Heart right ventricle (tissue), 16 donors: ENCODE measurements at regions of chr17 and their contacts with region 1.

Region 1: GRCh38 chr17:76307299-76307965 is 644 bp downstream of the QRICH2 start:
- DNase-seq: no peak
- ATAC-seq: peak in 4 of 8 donors; percentile 6 to 51 (median 27)
- H3K4me3 ChIP-seq: no peak overlapping the region
- H3K27ac ChIP-seq: no peak overlapping the region
- H3K4me1 ChIP-seq: peaks cover 0 to 3% (median 0%) of the 10 kb centered on the region in 9 donors
- H3K27me3 ChIP-seq: no peaks in the 10 kb centered on the region
- CTCF ChIP-seq: no peak

Region 2: DNA sequence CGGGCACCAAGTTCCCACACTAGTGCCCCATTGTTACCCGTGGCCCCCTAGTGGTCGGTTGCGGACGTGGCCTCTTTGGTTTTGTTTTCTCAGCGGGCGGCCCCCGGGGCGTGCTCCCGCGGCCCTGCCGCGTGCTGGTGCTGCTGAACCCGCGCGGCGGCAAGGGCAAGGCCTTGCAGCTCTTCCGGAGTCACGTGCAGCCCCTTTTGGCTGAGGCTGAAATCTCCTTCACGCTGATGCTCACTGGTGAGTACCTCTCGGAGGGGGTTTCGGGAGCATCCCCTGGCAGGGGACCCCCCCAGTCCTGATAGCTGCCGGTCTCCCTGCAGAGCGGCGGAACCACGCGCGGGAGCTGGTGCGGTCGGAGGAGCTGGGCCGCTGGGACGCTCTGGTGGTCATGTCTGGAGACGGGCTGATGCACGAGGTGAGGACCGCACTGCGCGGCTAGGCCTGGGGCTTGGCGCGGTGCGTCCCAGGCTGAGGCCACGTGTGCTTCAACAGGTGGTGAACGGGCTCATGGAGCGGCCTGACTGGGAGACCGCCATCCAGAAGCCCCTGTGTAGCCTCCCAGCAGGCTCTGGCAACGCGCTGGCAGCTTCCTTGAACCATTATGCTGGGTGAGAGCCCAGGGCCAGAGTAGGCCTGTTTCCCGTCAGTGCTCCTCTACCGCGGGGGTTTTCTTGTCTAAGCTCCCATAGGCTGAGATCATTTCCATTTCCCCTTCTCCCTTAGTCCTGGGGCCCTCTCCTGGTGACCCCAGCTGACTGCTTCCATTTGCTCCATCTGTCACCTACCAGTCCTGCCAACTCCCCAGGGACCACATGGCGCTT is 78.7 kb after region 1 on chr17:
- intact Hi-C with region 1: loop called in 1 of 10 experiments (anchors 5 kb)
- DNase-seq: peak; percentile 83 to 86
- ATAC-seq: peak; percentile 3 to 56 (median 36)
- H3K4me3 ChIP-seq: peak overlapping the region in 9 of 10 donors; percentile 55 to 84 (median 70)
- H3K27ac ChIP-seq: peak overlapping the region in 9 of 10 donors; percentile 39 to 98 (median 85)
- H3K4me1 ChIP-seq: peaks cover 10 to 57% (median 44%) of the 10 kb centered on the region in 9 donors
- H3K27me3 ChIP-seq: peaks cover 0 to 11% (median 0%) of the 10 kb centered on the region in 7 donors
- CTCF ChIP-seq: peak; percentile 81 to 91 (median 86)

Region 3: GRCh38 chr17:76397687-76398487 is 90.5 kb after region 1 on chr17:
- intact Hi-C with region 1: loop called (anchors 2 to 5 kb)
- DNase-seq: peak; percentile 87 to 91
- ATAC-seq: peak; percentile 74 to 89 (median 85)
- H3K4me3 ChIP-seq: no peak overlapping the region
- H3K27ac ChIP-seq: peak overlapping the region in 1 of 10 donors; percentile 17
- H3K4me1 ChIP-seq: peaks cover 3 to 16% (median 6%) of the 10 kb centered on the region in 9 donors
- H3K27me3 ChIP-seq: no peaks in the 10 kb centered on the region
- CTCF ChIP-seq: peak; percentile 96 to 99 (median 97)

Region 4: DNA sequence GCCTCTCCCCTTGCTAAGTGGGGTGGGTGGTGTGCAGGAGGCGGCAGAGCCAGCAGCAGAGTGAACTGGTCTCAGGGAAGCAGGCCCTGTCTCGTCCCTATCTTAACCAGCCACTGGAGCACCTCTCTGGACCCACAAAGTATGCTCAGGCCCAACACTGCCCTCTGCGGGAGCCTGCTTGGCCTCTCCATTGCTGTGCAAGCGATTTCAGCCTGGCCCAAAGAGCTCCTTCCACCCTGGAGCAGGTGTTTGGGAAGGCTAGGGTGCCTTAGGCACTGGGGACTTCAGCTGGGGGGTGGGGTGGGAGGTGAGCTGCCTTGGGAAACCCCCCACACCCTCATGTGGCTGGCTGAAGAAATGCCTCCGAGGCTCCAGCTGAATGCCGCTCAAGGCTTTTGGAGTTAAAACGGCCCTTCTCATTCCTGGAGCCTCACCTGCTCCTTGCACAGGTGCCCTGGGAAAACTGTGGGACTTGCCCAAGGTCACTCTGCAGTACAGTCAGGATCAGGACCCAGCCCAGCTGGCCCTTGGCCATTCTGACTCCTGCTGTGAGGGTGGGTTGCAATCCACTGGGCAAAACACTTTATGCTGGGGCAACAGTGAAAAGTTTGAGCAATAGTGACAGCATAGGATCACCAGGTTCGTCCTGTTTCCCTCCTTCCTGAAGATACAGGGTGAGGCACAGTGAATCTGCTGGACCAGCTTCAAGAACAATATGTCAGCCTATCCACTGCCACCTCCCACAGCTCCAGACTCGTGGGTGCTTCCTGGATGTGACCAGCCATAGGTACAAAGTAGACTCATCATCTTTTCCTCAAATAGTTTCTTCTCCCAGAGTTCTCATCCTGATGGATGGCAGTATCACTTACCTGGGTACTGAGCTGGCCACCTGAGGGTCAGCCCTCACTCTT is 151.4 kb after region 1 on chr17:
- intact Hi-C with region 1: loop called in 1 of 10 experiments (anchors 5 kb)
- DNase-seq: peak; percentile 48 to 57
- ATAC-seq: peak; percentile 43 to 86 (median 79)
- H3K4me3 ChIP-seq: no peak overlapping the region
- H3K27ac ChIP-seq: no peak overlapping the region
- H3K4me1 ChIP-seq: no peaks in the 10 kb centered on the region
- H3K27me3 ChIP-seq: no peaks in the 10 kb centered on the region
- CTCF ChIP-seq: peak in 8 of 9 donors; percentile 13 to 62 (median 53)

Region 5: DNA sequence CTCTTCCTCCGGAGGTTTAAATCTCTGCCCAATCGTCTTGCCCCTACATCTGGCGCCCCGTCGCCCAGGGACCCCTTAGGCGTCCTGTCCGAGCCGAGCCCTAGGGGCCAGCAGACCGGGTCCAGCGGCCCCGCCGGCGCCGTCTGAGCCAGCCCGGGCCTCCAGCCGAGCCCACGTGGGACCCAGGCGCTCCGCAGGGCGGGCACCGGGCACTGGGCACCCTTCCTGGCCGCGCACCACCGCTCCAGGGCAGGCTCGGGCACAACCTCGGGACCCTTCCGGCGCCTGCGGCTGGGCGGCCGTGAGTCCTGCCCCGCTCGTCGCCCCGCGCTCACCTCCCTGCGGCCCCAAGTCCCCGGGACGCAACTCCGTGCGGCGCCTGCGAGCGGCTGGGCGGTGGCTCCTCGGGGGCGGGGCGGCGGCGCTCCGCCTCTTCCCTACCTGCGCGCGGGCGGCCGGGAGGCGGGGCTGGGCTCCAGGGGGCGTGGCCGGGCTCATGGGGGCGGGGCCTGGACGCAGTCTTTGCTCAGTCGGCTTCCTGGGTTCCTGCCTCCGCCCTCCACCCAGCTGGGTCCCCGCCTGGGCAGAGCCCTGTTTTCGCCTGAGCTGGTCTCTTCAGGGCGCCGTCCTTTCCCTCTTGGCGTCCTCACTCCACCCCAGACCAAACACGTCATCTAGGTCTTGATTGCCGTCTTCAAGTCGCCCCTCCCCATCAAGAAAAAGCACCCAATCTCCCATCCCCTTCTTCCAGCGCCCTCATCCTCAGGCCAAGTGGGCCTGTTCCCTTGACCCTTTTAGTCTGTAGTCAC is 193.8 kb after region 1 on chr17 and contains the start of gene RHBDF2:
- intact Hi-C with region 1: loop called in 6 of 10 experiments (anchors 5 to 10 kb)
- DNase-seq: peak; percentile 85 to 94
- ATAC-seq: peak; percentile 80 to 91 (median 88)
- H3K4me3 ChIP-seq: peak within 1 kb of the TSS; percentile 35 to 85 (median 78)
- H3K27ac ChIP-seq: peak within 1 kb of the TSS; percentile 83 to 97 (median 92)
- H3K4me1 ChIP-seq: peaks cover 20 to 64% (median 48%) of the 10 kb centered on the region in 9 donors
- H3K27me3 ChIP-seq: no peaks in the 10 kb centered on the region
- CTCF ChIP-seq: no peak
- total RNA-seq, gene RHBDF2: 6.5 to 33.1 (median 7.7) TPM

Region 6: GRCh38 chr17:76506408-76507349 is 199.2 kb after region 1 on chr17:
- intact Hi-C with region 1: loop called in 6 of 10 experiments (anchors 5 to 10 kb)
- DNase-seq: peak; percentile 83 to 87
- ATAC-seq: peak; percentile 73 to 91 (median 79)
- H3K4me3 ChIP-seq: no peak overlapping the region
- H3K27ac ChIP-seq: no peak overlapping the region
- H3K4me1 ChIP-seq: peaks cover 2 to 40% (median 7%) of the 10 kb centered on the region in 9 donors
- H3K27me3 ChIP-seq: peaks cover 0 to 9% (median 0%) of the 10 kb centered on the region in 7 donors
- CTCF ChIP-seq: peak; percentile 81 to 98 (median 94)